HEK293T (cell line): ENCODE measurements at regions of chr1 and their contacts with region 1.

Region 1: GRCh38 chr1:119675349-119676345 is 27.6 kb upstream of the ZNF697 start:
- DNase-seq: peak; percentile 86

Region 2: DNA sequence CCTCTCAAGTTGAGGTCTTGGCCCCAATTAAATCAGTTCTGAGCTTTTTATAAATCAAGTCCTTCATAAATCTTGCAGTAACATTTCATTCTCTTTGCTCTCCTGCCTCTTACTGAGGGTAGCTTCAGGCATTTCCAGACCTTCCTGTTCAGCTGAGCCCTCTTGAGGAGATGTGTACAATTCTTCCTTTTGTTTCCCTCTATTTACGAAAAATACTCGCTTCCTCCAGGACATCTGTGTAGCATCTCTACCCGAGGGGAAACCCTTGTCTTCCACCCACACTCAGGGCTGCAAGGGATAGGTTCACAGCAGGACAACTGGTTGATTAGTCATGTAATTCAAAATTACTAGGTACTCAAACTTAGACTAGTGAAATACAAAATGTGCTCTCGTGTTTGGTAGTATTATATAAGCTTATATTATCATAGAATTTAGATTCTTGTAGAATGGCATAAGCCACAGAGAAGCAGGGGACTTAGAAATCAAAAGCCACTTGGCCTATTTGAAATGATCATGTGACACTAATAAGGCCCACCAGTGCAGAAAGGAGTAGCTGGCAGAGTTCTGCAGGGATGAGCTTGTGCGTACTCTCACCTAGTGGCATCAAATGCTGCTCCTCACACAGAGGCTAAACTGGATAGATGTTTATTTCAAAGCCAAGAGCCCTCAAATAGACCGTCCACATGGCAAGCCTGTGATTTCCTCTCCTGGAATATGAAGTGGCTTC is 1873.0 kb before region 1 on chr1:
- CTCF ChIA-PET with region 1: no interaction called
- POLR2A ChIA-PET with region 1: no interaction called
- DNase-seq: no peak

Region 3: GRCh38 chr1:119611701-119612113 is 63.9 kb before region 1 on chr1:
- CTCF ChIA-PET with region 1: interaction called, 11 read pairs
- POLR2A ChIA-PET with region 1: no interaction called
- DNase-seq: peak; percentile 75

Region 4: GRCh38 chr1:119637710-119638109 is 37.9 kb before region 1 on chr1:
- CTCF ChIA-PET with region 1: interaction called, 10 read pairs
- POLR2A ChIA-PET with region 1: no interaction called
- DNase-seq: no peak

Region 5: GRCh38 chr1:119647734-119648619 is 27.7 kb before region 1 on chr1 and contains the start of gene ZNF697:
- CTCF ChIA-PET with region 1: interaction called, 11 read pairs
- POLR2A ChIA-PET with region 1: interaction called, 8 read pairs
- DNase-seq: peak; percentile 93

Region 6: DNA sequence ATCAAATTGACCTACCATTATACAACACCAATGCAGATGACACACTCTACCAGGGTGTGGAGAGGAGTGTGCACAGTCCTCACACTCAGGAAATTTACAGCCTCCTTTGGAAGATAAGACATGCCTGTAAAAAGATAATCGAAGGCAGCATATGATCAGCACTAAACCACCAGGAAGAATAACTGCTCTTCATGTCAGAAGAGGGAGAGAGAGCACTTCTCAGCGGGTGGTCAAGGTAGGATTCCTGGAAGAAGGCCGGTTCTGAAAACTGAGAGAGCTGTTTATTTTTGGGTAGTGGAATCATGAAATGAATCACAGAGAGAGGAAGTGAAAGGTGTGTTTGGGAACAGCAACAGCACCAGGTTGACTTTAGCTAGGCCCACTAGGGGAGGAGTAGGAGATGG is 13.6 kb before region 1 on chr1:
- CTCF ChIA-PET with region 1: interaction called, 29 read pairs
- POLR2A ChIA-PET with region 1: no interaction called
- DNase-seq: no peak